Mucosa of descending colon (tissue), 3 donors: ENCODE measurements at regions of chr2 and their contacts with region 1.

Region 1: DNA sequence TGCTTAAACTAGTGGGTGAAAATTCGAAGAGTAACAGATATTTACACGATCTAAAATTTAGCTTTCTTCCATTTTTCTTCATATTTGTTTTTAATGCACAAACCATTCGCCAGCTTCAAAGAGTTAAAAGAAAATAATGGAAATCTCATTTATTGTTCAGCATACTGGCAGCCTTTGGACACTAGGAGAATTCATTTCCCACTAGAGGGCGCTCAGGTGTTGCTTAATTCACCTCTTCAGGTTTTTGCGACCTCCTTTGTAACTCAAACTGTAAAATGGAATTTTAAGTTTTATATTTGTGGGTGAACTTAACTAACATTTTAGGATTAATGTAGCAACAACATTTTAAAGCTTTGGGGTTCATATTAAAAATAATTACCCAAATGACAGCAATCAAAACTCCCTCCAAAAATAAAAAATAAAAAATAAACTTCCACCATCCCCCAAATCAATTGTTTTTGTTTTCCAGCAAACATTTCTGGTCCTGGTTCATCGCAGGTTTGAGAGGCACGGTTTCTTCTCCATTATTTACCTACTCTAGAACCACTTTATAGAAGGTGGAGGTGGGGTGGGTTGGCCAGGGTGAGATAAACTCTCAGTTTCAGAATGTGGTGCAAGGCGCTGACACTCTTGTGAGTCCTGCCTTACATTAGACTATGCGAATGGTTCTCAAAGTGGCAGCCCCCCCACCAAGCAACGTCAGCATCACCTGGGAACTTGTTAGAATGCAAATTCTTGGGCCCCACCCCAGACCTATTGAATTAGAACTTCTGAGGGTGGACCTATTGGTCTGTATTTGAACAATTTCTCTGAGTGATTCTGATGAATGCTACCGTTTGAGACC is 24.7 kb upstream of the PNPT1 start:
- DNase-seq: peak in 1 of 3 donors; percentile 90
- ATAC-seq: peak; percentile 55
- H3K4me3 ChIP-seq: no peak overlapping the region
- H3K4me1 ChIP-seq: peaks cover 5% of the 10 kb centered on the region
- CTCF ChIP-seq: peak; percentile 55

Region 2: DNA sequence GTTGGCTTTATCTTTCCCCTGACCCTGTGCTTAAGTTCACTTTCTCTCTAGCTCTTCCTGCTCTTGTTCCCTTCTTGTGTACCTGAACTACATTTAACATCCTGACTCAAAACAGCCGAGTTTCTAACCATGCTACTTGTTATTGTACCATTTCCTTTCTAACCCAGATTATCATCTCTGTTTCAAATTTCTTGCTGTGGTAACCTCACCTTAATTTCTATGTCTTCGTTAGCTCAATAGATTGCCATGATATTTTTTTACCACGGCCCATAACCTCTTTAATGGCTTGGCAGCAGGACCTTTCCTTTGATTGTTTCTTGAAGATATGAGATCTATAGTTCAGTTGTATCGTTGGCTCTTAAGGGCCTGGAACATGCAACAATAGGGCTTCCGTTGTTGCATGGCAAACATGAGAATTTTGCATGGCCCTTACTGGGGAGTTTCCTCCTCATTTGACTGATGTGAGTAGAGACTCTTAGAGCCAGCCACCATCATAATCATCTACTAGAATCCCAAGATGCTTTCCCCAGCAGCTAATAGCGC is 187.8 kb before region 1 on chr2:
- intact Hi-C with region 1: no loop called
- DNase-seq: no peak
- ATAC-seq: no peak
- H3K4me3 ChIP-seq: no peak overlapping the region
- H3K4me1 ChIP-seq: no peaks in the 10 kb centered on the region
- CTCF ChIP-seq: no peak

Region 3: GRCh38 chr2:56132138-56132537 is 413.8 kb after region 1 on chr2:
- intact Hi-C with region 1: loop called in 1 of 2 experiments (anchors 5 kb)
- DNase-seq: no peak
- ATAC-seq: no peak
- H3K4me3 ChIP-seq: no peak overlapping the region
- H3K4me1 ChIP-seq: no peaks in the 10 kb centered on the region
- CTCF ChIP-seq: no peak